ENCODE measurements at regions of chr1 and their contacts with region 1.

Region 1: DNA sequence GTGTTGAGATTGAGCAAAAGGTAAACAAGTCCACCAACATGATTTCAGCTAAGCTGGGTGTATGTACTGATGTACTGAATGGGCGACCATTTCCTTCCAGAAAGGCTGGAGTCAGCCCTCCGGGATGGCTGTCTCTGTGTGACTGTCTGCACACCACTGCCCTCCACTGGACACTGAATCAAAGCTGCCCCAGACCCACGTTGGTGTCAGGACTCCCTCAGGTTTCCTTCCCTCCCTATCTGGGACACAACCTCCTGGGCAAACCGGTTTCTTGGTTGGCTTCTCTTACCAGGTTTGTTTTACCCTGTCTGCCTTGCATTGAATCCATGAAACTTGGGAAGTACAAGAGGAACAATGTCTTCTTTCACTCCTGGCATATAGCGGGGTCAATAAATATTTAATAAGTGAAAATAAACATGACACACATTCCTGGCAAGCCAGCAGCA is 5.3 kb upstream of the SRP9 start:
- DNase-seq: peak; percentile 86
- ATAC-seq: peak; percentile 59
- H3K4me3 ChIP-seq: peak overlapping the region in 1 of 3 experiments; percentile 24; a peak in 1 of 6 replicates
- H3K27ac ChIP-seq: peak overlapping the region; percentile 34
- H3K4me1 ChIP-seq: peaks cover 83% of the 10 kb centered on the region
- H3K27me3 ChIP-seq: no peaks in the 10 kb centered on the region; a peak in 1 of 5 replicates
- CTCF ChIP-seq: peak; percentile 95
- EP300 ChIP-seq: no peak
- POLR2A ChIP-seq: no peak
- RAD21 ChIP-seq: peak; percentile 94

Region 2: DNA sequence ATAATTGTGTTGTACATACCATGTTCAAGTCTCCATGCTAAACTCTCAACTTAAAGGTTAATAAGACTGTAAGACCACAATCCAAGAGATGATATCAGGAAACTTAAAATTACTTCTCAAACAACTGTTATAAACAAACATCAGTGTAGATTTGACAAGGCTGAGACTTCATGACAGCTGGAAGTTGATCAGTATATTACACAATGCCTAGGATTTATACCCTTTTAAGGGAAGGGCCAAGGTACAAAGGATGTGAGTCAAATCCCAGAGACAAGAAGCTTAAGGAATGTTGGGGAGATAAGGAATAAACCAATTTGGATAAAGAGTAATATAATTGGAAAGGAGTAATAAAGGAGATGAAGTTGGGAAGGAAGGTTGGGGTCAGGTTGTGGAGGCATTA is 443.3 kb before region 1 on chr1:
- CTCF ChIA-PET with region 1: no interaction called
- POLR2A ChIA-PET with region 1: no interaction called
- in situ Hi-C with region 1: no loop called
- intact Hi-C with region 1: no loop called
- DNase-seq: peak; percentile 2
- ATAC-seq: no peak
- H3K4me3 ChIP-seq: no peak overlapping the region
- H3K27ac ChIP-seq: no peak overlapping the region
- H3K4me1 ChIP-seq: no peaks in the 10 kb centered on the region
- H3K27me3 ChIP-seq: no peaks in the 10 kb centered on the region
- CTCF ChIP-seq: no peak
- EP300 ChIP-seq: no peak
- POLR2A ChIP-seq: no peak
- RAD21 ChIP-seq: no peak

Region 3: GRCh38 chr1:225474986-225475820 is 297.1 kb before region 1 on chr1:
- CTCF ChIA-PET with region 1: interaction called, 32 read pairs
- POLR2A ChIA-PET with region 1: interaction called, 8 read pairs
- in situ Hi-C with region 1: loop called (anchors 5 kb)
- intact Hi-C with region 1: loop called (anchors 1 kb)
- DNase-seq: peak; percentile 54
- ATAC-seq: peak; percentile 86
- H3K4me3 ChIP-seq: peak overlapping the region; percentile 36 to 72 (median 48)
- H3K27ac ChIP-seq: no peak overlapping the region
- H3K4me1 ChIP-seq: peaks cover 42% of the 10 kb centered on the region
- H3K27me3 ChIP-seq: peaks cover 1 to 7% of the 10 kb centered on the region in 2 experiments; a peak in 2 of 5 replicates
- CTCF ChIP-seq: peak; percentile 100
- EP300 ChIP-seq: peak in 1 of 2 experiments; percentile 32; a peak in 1 of 4 replicates
- POLR2A ChIP-seq: no peak
- RAD21 ChIP-seq: peak; percentile 100

Region 4: DNA sequence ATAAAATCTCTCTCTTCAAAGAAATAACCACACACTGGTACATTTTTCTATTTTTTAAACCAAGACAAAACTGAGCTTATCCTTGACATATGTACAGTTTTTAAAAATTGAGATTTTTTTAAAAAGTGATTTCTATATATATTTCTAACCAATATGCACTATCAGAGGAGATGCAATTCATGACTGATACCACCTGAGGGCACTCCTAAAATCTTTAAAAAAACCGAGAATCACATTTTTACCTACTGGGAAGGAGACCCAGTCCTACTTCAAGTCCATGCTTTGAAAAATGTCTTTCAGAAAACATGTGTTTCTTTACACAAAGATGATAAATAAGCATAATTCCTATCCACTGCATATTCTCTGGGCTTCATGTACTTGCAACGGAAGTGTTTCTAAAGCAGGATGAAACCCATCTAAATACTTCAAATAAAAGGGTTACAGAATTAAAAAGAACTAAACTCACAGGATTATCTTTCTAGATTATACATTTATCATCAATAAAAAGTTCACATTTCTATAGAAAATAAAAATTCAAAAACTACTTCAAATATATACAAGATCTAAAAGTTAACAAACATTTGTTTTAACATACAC is 218.0 kb before region 1 on chr1:
- CTCF ChIA-PET with region 1: interaction called, 11 read pairs
- POLR2A ChIA-PET with region 1: no interaction called
- in situ Hi-C with region 1: no loop called
- intact Hi-C with region 1: loop called (anchors 1 kb)
- DNase-seq: peak; percentile 12
- ATAC-seq: no peak
- H3K4me3 ChIP-seq: no peak overlapping the region
- H3K27ac ChIP-seq: no peak overlapping the region
- H3K4me1 ChIP-seq: no peaks in the 10 kb centered on the region
- H3K27me3 ChIP-seq: no peaks in the 10 kb centered on the region
- CTCF ChIP-seq: peak; percentile 46
- EP300 ChIP-seq: no peak
- POLR2A ChIP-seq: no peak
- RAD21 ChIP-seq: no peak

Region 5: GRCh38 chr1:225652729-225653462 is 119.5 kb before region 1 on chr1 and contains the start of gene ENAH:
- CTCF ChIA-PET with region 1: no interaction called
- POLR2A ChIA-PET with region 1: interaction called, 27 read pairs
- in situ Hi-C with region 1: loop called (anchors 5 kb)
- intact Hi-C with region 1: loop called (anchors 2 kb)
- DNase-seq: peak; percentile 49
- ATAC-seq: peak; percentile 80
- H3K4me3 ChIP-seq: peak within 1 kb of the TSS; percentile 86 to 98 (median 94)
- H3K27ac ChIP-seq: peak within 1 kb of the TSS; percentile 66
- H3K4me1 ChIP-seq: peaks cover 57% of the 10 kb centered on the region
- H3K27me3 ChIP-seq: no peaks in the 10 kb centered on the region; a peak in 1 of 5 replicates
- CTCF ChIP-seq: no peak
- EP300 ChIP-seq: no peak
- POLR2A ChIP-seq: peak in 1 of 2 experiments; percentile 60; a peak in 3 of 4 replicates
- RAD21 ChIP-seq: 0 out of 2 replicates have a peak, but pooled peaks have one; percentile 46
- total RNA-seq, gene ENAH: 58.3 and 60.2 TPM in 2 replicates

Region 6: DNA sequence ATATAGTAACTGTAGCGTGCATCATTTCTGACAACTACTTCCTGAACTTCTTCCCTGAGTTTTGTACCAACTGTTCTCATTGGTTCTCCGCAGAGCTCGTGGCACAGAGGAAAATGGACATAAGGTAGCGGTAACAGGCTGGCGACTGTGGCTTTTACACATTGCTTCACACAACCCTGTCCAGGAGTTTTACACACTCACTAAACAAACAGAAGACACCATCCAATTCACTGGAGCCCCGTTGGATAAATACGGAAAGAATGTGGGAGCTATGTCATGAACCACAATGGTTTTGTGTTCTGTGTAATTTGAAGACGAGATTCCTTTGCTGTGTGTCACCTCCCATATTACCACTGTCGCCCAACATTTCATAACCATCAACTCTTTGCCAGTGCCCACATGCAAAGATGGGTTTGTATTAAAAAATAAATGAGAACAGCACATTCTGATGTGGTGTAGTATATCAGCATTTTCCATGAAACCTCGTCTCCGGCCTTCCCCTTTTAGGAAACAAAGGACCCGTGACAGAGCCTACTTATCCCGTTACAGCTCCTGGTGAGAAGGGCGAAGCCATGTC is 72.1 kb before region 1 on chr1:
- CTCF ChIA-PET with region 1: no interaction called
- POLR2A ChIA-PET with region 1: interaction called, 49 read pairs
- in situ Hi-C with region 1: no loop called
- intact Hi-C with region 1: loop called (anchors 2 kb)
- DNase-seq: peak; percentile 100
- ATAC-seq: peak; percentile 90
- H3K4me3 ChIP-seq: peak overlapping the region in 2 of 3 experiments; percentile 14 to 26; a peak in 2 of 6 replicates
- H3K27ac ChIP-seq: peak overlapping the region; percentile 71
- H3K4me1 ChIP-seq: peaks cover 58% of the 10 kb centered on the region
- H3K27me3 ChIP-seq: no peaks in the 10 kb centered on the region
- CTCF ChIP-seq: no peak
- EP300 ChIP-seq: peak; percentile 55 to 91; a peak in 3 of 4 replicates
- POLR2A ChIP-seq: peak in 1 of 2 experiments; percentile 48; a peak in 1 of 4 replicates
- RAD21 ChIP-seq: no peak

Measured in HepG2 (cell line).